ENCODE measurements at regions of chr5 and their contacts with region 1.

Region 1: GRCh38 chr5:171175746-171176145 is 133.3 kb upstream of the TLX3 start:
- DNase-seq: no peak
- ATAC-seq: no peak
- H3K4me3 ChIP-seq: no peak overlapping the region
- H3K27ac ChIP-seq: no peak overlapping the region
- H3K4me1 ChIP-seq: no peaks in the 10 kb centered on the region
- H3K27me3 ChIP-seq: no peaks in the 10 kb centered on the region
- CTCF ChIP-seq: no peak
- POLR2A ChIP-seq: no peak
- RAD21 ChIP-seq: no peak

Region 2: GRCh38 chr5:169956756-169957155 is 1219.0 kb before region 1 on chr5:
- CTCF ChIA-PET with region 1: no interaction called
- POLR2A ChIA-PET with region 1: no interaction called
- RAD21 ChIA-PET with region 1: no interaction called
- intact Hi-C with region 1: no loop called
- DNase-seq: no peak
- ATAC-seq: no peak
- H3K4me3 ChIP-seq: no peak overlapping the region
- H3K27ac ChIP-seq: no peak overlapping the region
- H3K4me1 ChIP-seq: no peaks in the 10 kb centered on the region
- H3K27me3 ChIP-seq: peaks cover 64% of the 10 kb centered on the region
- CTCF ChIP-seq: no peak
- POLR2A ChIP-seq: no peak
- RAD21 ChIP-seq: no peak

Region 3: DNA sequence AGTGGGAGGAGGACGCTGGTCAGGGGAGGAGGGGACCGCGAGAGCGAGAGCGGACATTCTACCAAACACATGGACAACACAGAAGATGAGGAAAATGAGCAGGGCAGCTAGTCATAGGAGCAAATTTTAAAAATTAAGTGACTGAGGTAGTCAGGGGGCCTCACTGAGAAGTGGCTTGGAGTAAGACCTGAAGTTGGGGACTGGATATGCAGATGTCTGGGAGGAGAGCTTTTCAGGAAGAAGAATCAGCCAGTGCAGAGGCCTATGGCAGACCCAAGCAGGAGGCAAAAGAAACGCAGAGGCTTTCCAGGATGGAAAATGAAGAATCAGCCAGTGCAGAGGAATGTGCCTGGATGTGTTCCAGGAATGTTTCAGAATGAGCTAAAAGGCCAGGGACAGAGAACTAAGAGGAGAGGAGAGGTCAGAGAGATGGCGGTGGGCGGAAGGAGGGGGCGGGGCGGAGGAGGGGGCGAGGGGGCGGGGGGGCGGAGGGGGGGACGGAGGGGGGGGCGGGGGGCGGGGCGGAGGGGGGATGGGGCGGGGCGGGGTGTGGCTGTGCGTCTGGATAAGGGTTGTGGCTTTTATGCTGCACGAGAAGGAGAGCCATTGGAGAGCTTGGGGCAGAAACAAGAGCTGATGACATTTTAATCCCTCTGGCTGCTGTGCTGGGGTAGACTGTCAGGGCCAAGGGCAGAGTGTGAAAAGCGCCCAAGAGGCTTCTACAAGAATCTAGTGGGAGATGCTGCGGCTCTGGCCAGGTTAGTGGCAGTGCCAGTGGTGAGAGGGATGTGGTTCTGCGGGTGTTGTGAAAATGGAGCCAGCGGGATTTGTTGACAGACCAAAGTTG is 542.3 kb before region 1 on chr5:
- CTCF ChIA-PET with region 1: no interaction called
- POLR2A ChIA-PET with region 1: no interaction called
- RAD21 ChIA-PET with region 1: no interaction called
- intact Hi-C with region 1: no loop called
- DNase-seq: peak; percentile 50
- ATAC-seq: peak; percentile 84
- H3K4me3 ChIP-seq: peak overlapping the region; percentile 44 to 54
- H3K27ac ChIP-seq: peak overlapping the region; percentile 64
- H3K4me1 ChIP-seq: peaks cover 11 to 27% of the 10 kb centered on the region in 2 experiments
- H3K27me3 ChIP-seq: no peaks in the 10 kb centered on the region
- CTCF ChIP-seq: no peak
- POLR2A ChIP-seq: peak; percentile 34
- RAD21 ChIP-seq: no peak

Region 4: GRCh38 chr5:170818232-170818631 is 357.5 kb before region 1 on chr5:
- CTCF ChIA-PET with region 1: no interaction called
- POLR2A ChIA-PET with region 1: no interaction called
- RAD21 ChIA-PET with region 1: no interaction called
- intact Hi-C with region 1: loop called (anchors 10 kb)
- DNase-seq: no peak
- ATAC-seq: no peak
- H3K4me3 ChIP-seq: no peak overlapping the region
- H3K27ac ChIP-seq: no peak overlapping the region
- H3K4me1 ChIP-seq: no peaks in the 10 kb centered on the region
- H3K27me3 ChIP-seq: no peaks in the 10 kb centered on the region
- CTCF ChIP-seq: no peak
- POLR2A ChIP-seq: no peak
- RAD21 ChIP-seq: no peak

Measured in HCT116 (cell line).